ENCODE measurements at regions of chr16 and their contacts with region 1.

Region 1: DNA sequence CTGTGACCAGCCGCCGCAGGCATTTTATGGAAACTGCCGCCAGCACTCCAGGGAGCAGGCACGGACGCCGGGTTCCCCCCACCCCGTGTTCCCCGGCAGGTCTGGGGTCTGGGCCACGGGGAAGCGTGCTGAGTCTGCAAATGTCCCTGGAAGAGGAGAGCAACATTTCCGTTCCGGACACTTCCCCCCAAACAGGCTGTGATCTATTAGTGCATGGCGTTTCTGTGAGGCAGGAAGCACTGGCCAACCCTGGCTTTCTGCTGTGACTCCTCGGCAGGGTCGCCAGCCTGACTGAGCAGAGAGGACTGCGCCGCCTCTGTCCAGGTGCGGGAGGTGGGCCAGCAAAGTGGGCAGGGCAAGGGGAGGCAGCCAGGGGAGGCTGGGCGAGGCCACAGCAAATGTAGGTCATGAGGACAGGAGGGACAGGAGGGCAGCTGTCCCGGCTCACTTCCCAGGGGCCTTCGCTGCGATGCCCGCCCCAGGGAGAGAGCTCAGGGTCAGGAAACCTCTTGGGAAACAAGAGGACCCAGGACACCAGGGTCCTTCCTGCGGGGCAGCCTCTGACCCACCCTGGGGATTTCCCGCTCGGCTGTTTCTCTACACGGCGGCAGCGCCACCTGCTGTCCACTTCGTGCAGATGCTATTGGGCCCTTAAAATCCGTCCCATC is 9.5 kb downstream of the FOXF1 start:
- DNase-seq: peak; percentile 87
- H3K4me3 Mint-ChIP-seq: peak overlapping the region; percentile 6
- H3K27ac Mint-ChIP-seq: no peak overlapping the region
- H3K4me1 Mint-ChIP-seq: peaks cover 2% of the 10 kb centered on the region
- H3K27me3 Mint-ChIP-seq: peaks cover 41% of the 10 kb centered on the region

Region 2: GRCh38 chr16:85821441-85822135 is 698.2 kb before region 1 on chr16:
- intact Hi-C with region 1: loop called (anchors 10 kb)
- DNase-seq: peak; percentile 94
- H3K4me3 Mint-ChIP-seq: no peak overlapping the region
- H3K27ac Mint-ChIP-seq: no peak overlapping the region
- H3K4me1 Mint-ChIP-seq: peaks cover 7% of the 10 kb centered on the region
- H3K27me3 Mint-ChIP-seq: peaks cover 5% of the 10 kb centered on the region

Region 3: GRCh38 chr16:86072328-86073102 is 447.3 kb before region 1 on chr16:
- intact Hi-C with region 1: loop called (anchors 2 kb)
- DNase-seq: peak; percentile 78
- H3K4me3 Mint-ChIP-seq: no peak overlapping the region
- H3K27ac Mint-ChIP-seq: no peak overlapping the region
- H3K4me1 Mint-ChIP-seq: no peaks in the 10 kb centered on the region
- H3K27me3 Mint-ChIP-seq: peaks cover 4% of the 10 kb centered on the region

Region 4: DNA sequence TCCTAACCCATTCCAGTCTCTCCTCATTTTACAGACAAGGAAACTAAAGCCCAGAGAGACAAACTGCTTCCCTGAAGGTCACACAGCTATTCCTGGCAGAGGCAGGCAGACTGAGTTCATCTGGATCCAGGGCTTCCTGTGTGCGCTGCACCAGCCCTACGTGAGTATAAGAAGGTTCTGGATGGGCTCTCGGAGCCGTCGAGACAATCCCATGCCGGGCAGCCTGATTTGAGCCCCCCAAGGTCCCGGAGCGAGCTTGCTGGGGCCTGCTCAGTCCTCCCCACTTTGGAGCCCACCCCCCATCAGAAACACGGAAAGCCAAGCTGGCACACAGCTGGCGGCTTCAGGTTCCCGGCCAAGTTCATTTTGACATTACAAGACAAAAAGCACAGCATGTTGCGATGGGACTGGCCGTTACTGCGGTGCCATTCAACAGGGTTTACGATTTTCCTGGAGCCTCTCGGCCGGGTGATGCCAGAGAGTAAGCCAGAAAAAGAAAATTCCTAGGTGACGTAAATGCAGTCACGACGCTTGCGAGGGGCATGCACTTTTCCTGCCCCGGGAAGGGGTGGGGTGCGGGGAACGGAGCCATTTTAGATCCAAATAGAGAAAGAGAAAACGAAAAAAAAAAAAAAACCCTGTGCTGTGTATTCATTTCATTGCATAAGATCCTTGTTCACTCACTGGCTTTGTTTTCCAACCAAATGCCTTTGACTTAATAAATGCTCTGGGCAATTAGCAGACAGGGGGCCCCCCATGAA is 176.6 kb before region 1 on chr16:
- intact Hi-C with region 1: loop called (anchors 5 kb)
- DNase-seq: no peak
- H3K4me3 Mint-ChIP-seq: no peak overlapping the region
- H3K27ac Mint-ChIP-seq: no peak overlapping the region
- H3K4me1 Mint-ChIP-seq: no peaks in the 10 kb centered on the region
- H3K27me3 Mint-ChIP-seq: peaks cover 32% of the 10 kb centered on the region

Region 5: GRCh38 chr16:86387461-86388440 is 132.0 kb before region 1 on chr16:
- intact Hi-C with region 1: no loop called
- DNase-seq: no peak
- H3K4me3 Mint-ChIP-seq: no peak overlapping the region
- H3K27ac Mint-ChIP-seq: no peak overlapping the region
- H3K4me1 Mint-ChIP-seq: no peaks in the 10 kb centered on the region
- H3K27me3 Mint-ChIP-seq: no peaks in the 10 kb centered on the region

Region 6: DNA sequence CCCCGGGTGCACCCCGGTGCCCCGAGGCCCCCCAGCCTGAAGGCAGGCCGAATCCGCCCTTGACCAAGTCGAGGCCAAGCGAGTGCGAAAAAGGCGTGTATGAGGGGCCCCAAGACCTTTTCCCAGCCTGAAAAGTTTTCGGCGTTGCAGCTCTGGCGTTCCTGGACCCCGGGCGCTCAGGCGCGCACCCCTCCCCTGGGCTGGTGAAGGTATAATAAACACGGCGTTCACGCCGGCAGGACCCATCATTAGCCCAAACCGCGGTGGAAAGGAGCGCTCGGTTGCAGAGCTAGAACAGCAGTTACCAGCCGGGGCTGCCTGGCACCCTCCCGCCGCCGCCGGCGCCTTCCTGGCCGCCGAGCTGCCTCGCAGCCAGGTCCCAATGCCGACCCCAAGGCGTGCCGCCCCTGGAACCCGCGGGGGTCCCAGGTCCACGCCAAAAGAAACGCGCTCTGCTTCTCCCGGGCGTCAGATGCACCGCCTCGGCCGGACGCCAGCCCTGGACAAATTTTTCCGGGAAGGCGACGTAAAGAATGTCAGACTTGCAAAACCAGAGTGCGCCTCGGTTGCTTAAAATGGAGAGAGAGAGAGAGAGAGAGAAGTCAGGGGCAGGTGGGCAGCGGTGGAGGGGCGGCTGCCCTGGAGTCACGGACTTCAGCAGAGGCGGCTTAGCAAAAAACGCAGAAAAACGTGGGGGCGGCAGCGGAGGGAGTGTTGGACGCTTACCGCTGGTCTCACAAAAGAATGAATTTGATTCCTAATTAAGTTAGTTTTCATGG is 20.9 kb before region 1 on chr16:
- intact Hi-C with region 1: loop called (anchors 2 kb)
- DNase-seq: no peak
- H3K4me3 Mint-ChIP-seq: no peak overlapping the region
- H3K27ac Mint-ChIP-seq: peak overlapping the region; percentile 41
- H3K4me1 Mint-ChIP-seq: no peaks in the 10 kb centered on the region
- H3K27me3 Mint-ChIP-seq: peaks cover 81% of the 10 kb centered on the region

Measured in activated CD4-positive, alpha-beta T cell treated with anti-CD3 and anti-CD28 coated beads, Interleukin-2, amount 10 ng/mL, durations not matched to agents 24 days and 14 days (primary cell).